Heart right ventricle (tissue), 16 donors: ENCODE measurements at regions of chr3 and their contacts with region 1.

Region 1: GRCh38 chr3:36729204-36730056 is 34.9 kb downstream of the DCLK3 start:
- DNase-seq: no peak
- ATAC-seq: peak in 6 of 8 donors; percentile 47 to 65 (median 56)
- H3K4me3 ChIP-seq: no peak overlapping the region
- H3K27ac ChIP-seq: no peak overlapping the region
- H3K4me1 ChIP-seq: peaks cover 0 to 22% (median 14%) of the 10 kb centered on the region in 9 donors
- H3K27me3 ChIP-seq: no peaks in the 10 kb centered on the region
- CTCF ChIP-seq: peak; percentile 59 to 88 (median 75)

Region 2: GRCh38 chr3:36784012-36784662 is 54.7 kb after region 1 on chr3:
- intact Hi-C with region 1: loop called in 1 of 10 experiments (anchors 5 kb)
- DNase-seq: no peak
- ATAC-seq: peak in 7 of 8 donors; percentile 31 to 84 (median 65)
- H3K4me3 ChIP-seq: no peak overlapping the region
- H3K27ac ChIP-seq: peak overlapping the region in 7 of 10 donors; percentile 8 to 58 (median 44)
- H3K4me1 ChIP-seq: peaks cover 0 to 20% (median 5%) of the 10 kb centered on the region in 9 donors
- H3K27me3 ChIP-seq: no peaks in the 10 kb centered on the region
- CTCF ChIP-seq: peak in 1 of 9 donors; percentile 6

Region 3: GRCh38 chr3:36868614-36869436 is 139.4 kb after region 1 on chr3:
- intact Hi-C with region 1: loop called (anchors 1 to 5 kb)
- DNase-seq: peak in 1 of 2 donors; percentile 48
- ATAC-seq: peak in 7 of 8 donors; percentile 64 to 85 (median 79)
- H3K4me3 ChIP-seq: no peak overlapping the region
- H3K27ac ChIP-seq: no peak overlapping the region
- H3K4me1 ChIP-seq: peaks cover 0 to 13% (median 0%) of the 10 kb centered on the region in 9 donors
- H3K27me3 ChIP-seq: no peaks in the 10 kb centered on the region
- CTCF ChIP-seq: peak; percentile 62 to 88 (median 80)